ENCODE measurements at regions of chr7 and their contacts with region 1.

Region 1: DNA sequence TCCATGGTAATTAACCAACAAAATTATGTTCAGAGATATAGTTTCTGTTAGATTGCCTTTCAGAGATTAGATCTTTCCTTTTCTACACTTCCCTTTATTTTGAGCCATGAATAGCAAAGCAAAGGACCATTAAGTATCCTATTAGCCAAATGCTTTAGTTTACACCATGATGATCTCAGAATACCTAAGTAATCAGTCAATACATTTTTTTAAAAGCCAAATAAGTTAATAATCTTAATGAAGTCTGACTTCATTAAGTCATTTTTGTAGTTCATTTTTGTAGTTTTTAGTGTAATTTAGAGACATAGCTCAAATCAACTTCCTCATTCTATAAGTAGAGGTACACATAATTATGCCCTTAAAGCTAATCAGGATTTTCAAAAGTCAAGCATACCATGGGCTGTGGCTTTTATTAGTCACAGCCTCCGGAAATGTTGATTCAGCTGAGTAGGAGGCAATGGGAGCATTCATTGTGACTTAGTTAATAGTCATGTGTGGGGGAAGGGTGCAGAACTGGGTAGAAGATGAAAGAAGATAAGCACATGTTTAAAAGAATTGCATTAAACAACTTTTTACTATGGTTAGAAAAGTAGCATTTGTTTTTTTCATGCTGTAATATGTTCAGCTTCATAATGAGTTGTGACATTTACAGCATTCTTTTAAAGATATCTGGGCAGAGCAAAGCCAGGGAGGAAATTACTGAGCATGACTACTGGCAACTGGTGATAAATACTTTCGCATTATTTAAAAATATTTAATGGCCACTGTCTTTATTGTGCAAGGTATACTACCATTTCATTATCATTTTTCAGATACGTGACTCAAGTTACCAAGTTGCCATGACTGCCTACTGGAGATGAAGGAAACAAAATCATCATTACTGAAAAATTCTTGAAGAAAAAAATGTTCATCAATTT is 57.3 kb upstream of the CCDC71L start:
- DNase-seq: peak in 1 of 2 donors; percentile 36
- ATAC-seq: peak; percentile 68 to 91 (median 80)
- H3K4me3 ChIP-seq: no peak overlapping the region
- H3K27ac ChIP-seq: peak overlapping the region in 7 of 10 donors; percentile 1 to 83 (median 26)
- H3K4me1 ChIP-seq: peaks cover 0 to 52% (median 6%) of the 10 kb centered on the region in 9 donors
- H3K27me3 ChIP-seq: peaks cover 0 to 5% (median 0%) of the 10 kb centered on the region in 7 donors
- CTCF ChIP-seq: no peak

Region 2: GRCh38 chr7:105473163-105473562 is 1245.0 kb before region 1 on chr7:
- intact Hi-C with region 1: no loop called
- DNase-seq: no peak
- ATAC-seq: peak in 2 of 8 donors; percentile 17 to 58
- H3K4me3 ChIP-seq: no peak overlapping the region
- H3K27ac ChIP-seq: no peak overlapping the region
- H3K4me1 ChIP-seq: no peaks in the 10 kb centered on the region
- H3K27me3 ChIP-seq: no peaks in the 10 kb centered on the region
- CTCF ChIP-seq: no peak

Region 3: DNA sequence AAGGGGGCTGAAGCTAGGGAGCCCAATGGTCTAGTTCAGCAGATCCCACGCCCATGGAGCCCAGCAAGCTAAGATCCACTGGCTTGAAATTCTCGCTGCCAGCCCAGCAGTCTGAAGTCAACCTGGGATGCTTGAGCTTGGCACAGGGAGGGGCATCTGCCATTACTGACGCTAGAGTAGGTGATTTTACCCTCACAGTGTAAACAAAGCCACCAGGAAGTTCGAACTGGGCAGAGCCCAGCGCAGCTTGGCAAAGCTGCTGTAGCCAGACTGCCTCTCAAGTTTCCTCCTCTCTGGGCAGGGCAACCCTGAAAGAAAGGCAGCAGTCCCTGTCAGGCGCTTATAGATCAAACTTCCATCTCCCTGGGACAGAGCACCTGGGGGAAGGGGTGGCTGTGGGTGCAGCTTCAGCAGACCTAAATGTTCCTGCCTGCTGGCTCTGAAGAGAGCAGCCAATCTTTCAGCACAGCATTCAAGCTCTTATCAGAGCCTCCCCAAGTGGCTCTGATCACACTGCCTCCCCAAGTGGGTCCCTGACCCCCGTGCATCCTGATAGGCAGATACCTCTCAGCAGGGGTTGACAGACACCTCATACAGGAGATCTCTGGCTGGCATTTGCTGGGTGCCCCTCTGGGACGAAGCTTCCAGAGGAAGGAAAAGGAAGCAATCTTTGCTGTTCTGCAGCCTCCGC is 225.0 kb before region 1 on chr7:
- intact Hi-C with region 1: no loop called
- DNase-seq: no peak
- ATAC-seq: no peak
- H3K4me3 ChIP-seq: no peak overlapping the region
- H3K27ac ChIP-seq: no peak overlapping the region
- H3K4me1 ChIP-seq: no peaks in the 10 kb centered on the region
- H3K27me3 ChIP-seq: no peaks in the 10 kb centered on the region
- CTCF ChIP-seq: no peak

Region 4: GRCh38 chr7:106668861-106669524 is 49.2 kb before region 1 on chr7:
- intact Hi-C with region 1: loop called in 2 of 10 experiments (anchors 5 kb)
- DNase-seq: no peak
- ATAC-seq: no peak
- H3K4me3 ChIP-seq: no peak overlapping the region
- H3K27ac ChIP-seq: no peak overlapping the region
- H3K4me1 ChIP-seq: no peaks in the 10 kb centered on the region
- H3K27me3 ChIP-seq: no peaks in the 10 kb centered on the region
- CTCF ChIP-seq: no peak

Region 5: GRCh38 chr7:106840342-106840741 is 122.1 kb after region 1 on chr7:
- intact Hi-C with region 1: no loop called
- DNase-seq: no peak
- ATAC-seq: no peak
- H3K4me3 ChIP-seq: no peak overlapping the region
- H3K27ac ChIP-seq: no peak overlapping the region
- H3K4me1 ChIP-seq: peaks cover 0 to 8% (median 0%) of the 10 kb centered on the region in 9 donors
- H3K27me3 ChIP-seq: no peaks in the 10 kb centered on the region
- CTCF ChIP-seq: no peak

Measured in heart right ventricle (tissue), 16 donors.